Panc1 (cell line): ENCODE measurements at regions of chr16 and their contacts with region 1.

Region 1: GRCh38 chr16:21158208-21159110 is at the start of gene LDAF1:
- DNase-seq: no peak
- ATAC-seq: peak; percentile 95
- H3K4me3 ChIP-seq: peak within 1 kb of the TSS; percentile 61 to 76
- H3K27ac ChIP-seq: peak within 1 kb of the TSS; percentile 65
- H3K4me1 ChIP-seq: peaks cover 3% of the 10 kb centered on the region; the same call in 1 of the 2 replicates
- H3K27me3 ChIP-seq: no peaks in the 10 kb centered on the region
- CTCF ChIP-seq: no peak
- total RNA-seq, gene LDAF1: 15.2 TPM

Region 2: DNA sequence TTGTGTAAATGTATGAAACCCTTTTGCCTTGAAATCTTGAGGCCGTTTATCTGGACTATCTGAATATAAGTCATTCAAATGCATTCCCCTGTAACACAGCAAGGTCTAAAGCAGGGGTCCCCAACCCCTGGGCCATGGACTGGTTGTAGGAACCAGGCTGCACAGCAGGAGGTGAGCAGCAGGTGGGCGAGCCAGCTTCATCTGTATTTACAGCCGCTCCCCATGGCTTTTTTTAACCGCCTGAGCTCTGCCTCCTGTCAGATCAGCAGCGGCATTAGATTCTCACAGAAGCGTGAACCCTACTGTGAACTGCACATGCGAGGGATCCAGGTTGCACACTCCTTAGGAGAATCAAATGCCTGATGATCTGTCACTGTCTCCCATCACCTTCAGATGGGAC is 31.9 kb before region 1 on chr16:
- CTCF ChIA-PET with region 1: no interaction called
- POLR2A ChIA-PET with region 1: no interaction called
- in situ Hi-C with region 1: no loop called
- intact Hi-C with region 1: no loop called
- DNase-seq: no peak
- ATAC-seq: no peak
- H3K4me3 ChIP-seq: no peak overlapping the region
- H3K27ac ChIP-seq: no peak overlapping the region
- H3K4me1 ChIP-seq: no peaks in the 10 kb centered on the region
- H3K27me3 ChIP-seq: peaks cover 13% of the 10 kb centered on the region; the same call in 1 of the 2 replicates
- CTCF ChIP-seq: no peak

Region 3: DNA sequence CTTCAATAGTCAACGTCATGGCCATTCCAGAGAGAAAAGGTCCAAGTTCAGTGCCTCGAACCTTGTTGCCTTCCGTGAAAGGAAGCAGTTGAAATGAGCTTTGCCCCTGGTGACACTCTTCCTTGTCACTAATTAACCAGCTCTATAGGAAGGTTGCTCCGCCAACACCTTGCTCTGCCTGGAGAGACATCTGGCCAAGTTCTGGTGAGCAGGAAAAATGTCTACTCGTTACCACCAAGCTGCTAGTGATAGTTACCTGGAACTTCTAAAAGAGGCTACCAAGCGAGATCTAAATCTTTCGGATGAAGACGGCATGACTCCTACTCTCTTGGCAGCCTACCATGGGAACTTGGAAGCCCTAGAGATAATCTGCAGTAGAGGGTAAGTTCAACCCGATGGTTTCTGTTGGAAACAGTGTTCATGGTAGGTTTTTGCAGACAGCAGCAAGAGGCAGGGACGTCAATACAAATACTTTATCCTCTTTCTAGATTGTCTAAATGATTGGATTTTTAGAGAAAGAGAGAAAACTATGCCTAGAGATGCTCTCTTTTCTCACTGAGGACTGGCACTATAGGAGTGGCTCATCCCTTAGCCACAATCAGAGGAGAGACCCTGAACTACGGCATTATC is 75.2 kb after region 1 on chr16 and contains the start of gene ANKS4B:
- CTCF ChIA-PET with region 1: no interaction called
- POLR2A ChIA-PET with region 1: no interaction called
- in situ Hi-C with region 1: no loop called
- intact Hi-C with region 1: no loop called
- DNase-seq: no peak
- ATAC-seq: no peak
- H3K4me3 ChIP-seq: no peak within 1 kb of the TSS
- H3K27ac ChIP-seq: no peak within 1 kb of the TSS
- H3K4me1 ChIP-seq: no peaks in the 10 kb centered on the region
- H3K27me3 ChIP-seq: peaks cover 22% of the 10 kb centered on the region; the same call in 1 of the 2 replicates
- CTCF ChIP-seq: no peak
- total RNA-seq, gene ANKS4B: not detected

Region 4: DNA sequence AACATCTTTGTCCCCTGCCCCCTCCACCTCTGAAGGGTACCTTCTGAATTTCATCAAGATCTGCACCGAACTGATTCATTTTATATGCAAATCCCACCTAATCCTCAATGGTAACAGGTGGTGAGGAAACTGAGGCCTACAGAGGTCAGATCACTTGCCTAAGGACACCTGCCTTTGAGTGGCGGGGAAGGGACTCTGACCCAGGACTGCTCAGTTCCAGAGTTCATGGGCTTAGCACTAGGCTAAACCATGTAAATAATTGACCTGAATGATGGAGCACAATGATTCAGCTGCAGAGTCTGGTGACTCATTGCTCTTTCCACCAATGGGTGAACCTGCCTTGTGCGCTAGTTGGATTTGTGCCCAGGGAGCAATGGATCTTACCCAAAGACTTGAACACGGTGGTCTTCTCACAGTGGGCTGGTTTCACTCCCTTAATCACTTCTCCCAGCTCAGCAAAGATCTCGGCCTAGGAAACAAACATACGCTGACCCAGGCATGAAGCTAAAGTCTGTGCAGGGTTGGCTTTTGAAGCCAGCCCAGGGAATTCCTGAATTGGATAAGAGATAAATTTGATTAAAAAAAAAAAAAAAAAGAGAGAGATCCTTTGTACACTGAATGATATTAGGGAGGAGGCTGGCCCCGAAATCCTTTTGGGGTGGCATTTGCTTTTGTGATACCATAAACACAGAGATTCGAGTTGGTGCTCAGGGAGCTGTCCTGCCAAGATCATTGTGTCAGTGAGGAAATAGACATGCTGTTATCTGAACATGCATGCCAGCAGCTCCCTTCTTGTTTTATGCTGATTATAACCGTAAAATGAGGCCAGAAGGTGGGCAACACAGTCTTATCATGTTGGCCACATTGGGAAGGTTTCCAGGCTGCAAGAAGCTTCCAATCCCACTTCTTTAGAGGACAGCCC is 102.7 kb after region 1 on chr16:
- CTCF ChIA-PET with region 1: no interaction called
- POLR2A ChIA-PET with region 1: interaction called, 16 read pairs
- in situ Hi-C with region 1: no loop called
- intact Hi-C with region 1: no loop called
- DNase-seq: peak; percentile 32
- ATAC-seq: peak; percentile 51; the same call in 1 of the 2 replicates
- H3K4me3 ChIP-seq: no peak overlapping the region
- H3K27ac ChIP-seq: no peak overlapping the region
- H3K4me1 ChIP-seq: no peaks in the 10 kb centered on the region
- H3K27me3 ChIP-seq: no peaks in the 10 kb centered on the region
- CTCF ChIP-seq: no peak

Region 5: GRCh38 chr16:21300309-21301167 is 142.1 kb after region 1 on chr16:
- CTCF ChIA-PET with region 1: interaction called, 23 read pairs
- POLR2A ChIA-PET with region 1: interaction called, 6 read pairs
- in situ Hi-C with region 1: no loop called
- intact Hi-C with region 1: loop called (anchors 5 kb)
- DNase-seq: peak; percentile 100
- ATAC-seq: peak; percentile 89
- H3K4me3 ChIP-seq: peak overlapping the region; percentile 66 to 87
- H3K27ac ChIP-seq: peak overlapping the region; percentile 73
- H3K4me1 ChIP-seq: peaks cover 8% of the 10 kb centered on the region; the same call in 1 of the 2 replicates
- H3K27me3 ChIP-seq: no peaks in the 10 kb centered on the region
- CTCF ChIP-seq: peak; percentile 96

Region 6: DNA sequence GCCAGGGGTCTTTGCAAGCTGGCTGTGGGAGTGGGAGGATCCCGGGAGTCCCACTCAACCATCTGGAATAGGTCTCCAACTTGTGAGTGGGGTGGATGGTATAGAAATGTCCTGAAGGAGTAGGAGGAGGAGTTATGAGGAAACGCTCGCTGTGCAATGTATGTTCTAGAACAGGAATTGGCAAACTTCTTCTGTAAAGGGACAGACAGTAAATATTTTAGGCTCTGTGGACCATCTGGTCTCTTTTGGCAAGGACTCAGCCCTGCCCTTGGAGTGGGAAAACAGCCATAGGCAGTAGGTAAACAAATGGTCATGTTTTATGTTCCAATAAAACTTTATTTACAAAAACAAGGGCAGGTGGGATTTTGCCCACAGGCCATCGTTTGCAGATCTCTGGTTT is 1501.5 kb after region 1 on chr16:
- CTCF ChIA-PET with region 1: interaction called, 10 read pairs
- POLR2A ChIA-PET with region 1: no interaction called
- in situ Hi-C with region 1: no loop called
- intact Hi-C with region 1: no loop called
- DNase-seq: no peak
- ATAC-seq: no peak
- H3K4me3 ChIP-seq: no peak overlapping the region
- H3K27ac ChIP-seq: no peak overlapping the region
- H3K4me1 ChIP-seq: no peaks in the 10 kb centered on the region
- H3K27me3 ChIP-seq: peaks cover 21% of the 10 kb centered on the region
- CTCF ChIP-seq: no peak